ENCODE measurements at regions of chr19 and their contacts with region 1.

Region 1: GRCh38 chr19:42396381-42397262 is 6.5 kb upstream of the CNFN start:
- DNase-seq: peak; percentile 99
- ATAC-seq: peak; percentile 98

Region 2: GRCh38 chr19:42433503-42434260 is 37.1 kb after region 1 on chr19:
- intact Hi-C with region 1: loop called (anchors 5 kb)
- DNase-seq: peak; percentile 91
- ATAC-seq: peak; percentile 88

Region 3: DNA sequence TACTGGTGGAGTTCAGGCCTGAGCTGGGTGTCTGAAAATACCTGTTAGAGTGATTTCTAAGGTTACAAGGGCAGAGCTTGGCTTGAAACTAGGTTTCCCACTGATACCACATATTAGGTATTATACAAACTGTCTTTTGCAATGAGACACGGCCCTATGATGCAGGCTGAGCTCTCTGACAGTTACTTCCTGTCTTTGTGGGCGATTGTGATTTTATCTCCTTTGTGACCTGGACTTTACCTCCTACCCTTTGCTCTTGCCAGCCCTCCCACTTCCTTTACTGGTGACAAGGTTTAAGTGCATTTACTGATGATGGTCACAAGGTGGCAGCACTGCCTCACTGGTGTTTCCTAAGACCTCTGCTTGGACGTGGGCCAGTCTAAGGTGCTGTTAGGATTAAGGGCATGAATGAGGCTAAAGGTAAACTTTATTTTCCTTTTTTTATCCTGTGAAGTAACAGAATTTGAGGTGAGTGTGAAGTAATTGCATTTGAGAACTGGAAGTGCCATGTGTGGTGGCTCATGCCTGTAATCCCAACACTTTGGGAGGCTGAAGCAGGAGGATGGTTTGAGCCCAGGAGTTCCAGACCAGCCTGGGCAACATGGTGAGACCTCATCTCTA is 53.8 kb after region 1 on chr19:
- intact Hi-C with region 1: no loop called
- DNase-seq: peak; percentile 85
- ATAC-seq: peak; percentile 73

Measured in Right ventricle myocardium inferior (tissue), 1 donor.